Activated CD4-positive, alpha-beta memory T cell treated with anti-CD3 and anti-CD28 coated beads for 36 hours (primary cell): ENCODE measurements at regions of chr10 and their contacts with region 1.

Region 1: DNA sequence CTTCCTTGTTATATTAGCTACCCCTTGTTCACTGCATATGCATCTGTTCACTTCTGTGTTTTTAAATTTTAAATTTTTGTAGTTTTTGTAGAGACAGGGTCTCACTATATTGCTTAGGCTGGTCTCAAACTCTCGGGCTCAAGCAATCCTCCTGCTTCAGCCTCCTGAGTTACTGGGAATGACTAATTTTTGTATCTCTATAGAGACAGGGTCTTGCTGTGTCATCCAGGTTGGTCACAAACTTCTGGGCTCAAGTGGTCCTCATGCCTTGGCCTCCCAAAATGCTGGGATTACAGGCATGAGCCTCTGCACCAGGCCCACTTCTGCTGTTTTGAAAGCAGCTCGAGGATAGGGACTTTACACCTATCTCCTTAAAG is 64.6 kb downstream of the PRTFDC1 start:
- DNase-seq: no peak
- H3K4me3 Mint-ChIP-seq: no peak overlapping the region
- H3K27ac Mint-ChIP-seq: peak overlapping the region; percentile 76
- H3K4me1 Mint-ChIP-seq: peaks cover 35% of the 10 kb centered on the region
- H3K27me3 Mint-ChIP-seq: no peaks in the 10 kb centered on the region

Region 2: GRCh38 chr10:24806262-24806661 is 81.6 kb before region 1 on chr10:
- CTCF ChIA-PET with region 1: no interaction called
- POLR2A ChIA-PET with region 1: no interaction called
- intact Hi-C with region 1: no loop called
- DNase-seq: no peak
- H3K4me3 Mint-ChIP-seq: no peak overlapping the region
- H3K27ac Mint-ChIP-seq: no peak overlapping the region
- H3K4me1 Mint-ChIP-seq: no peaks in the 10 kb centered on the region
- H3K27me3 Mint-ChIP-seq: no peaks in the 10 kb centered on the region

Region 3: GRCh38 chr10:24826019-24826418 is 61.8 kb before region 1 on chr10:
- CTCF ChIA-PET with region 1: no interaction called
- POLR2A ChIA-PET with region 1: no interaction called
- intact Hi-C with region 1: no loop called
- DNase-seq: no peak
- H3K4me3 Mint-ChIP-seq: peak overlapping the region; percentile 40
- H3K27ac Mint-ChIP-seq: no peak overlapping the region
- H3K4me1 Mint-ChIP-seq: peaks cover 36% of the 10 kb centered on the region
- H3K27me3 Mint-ChIP-seq: no peaks in the 10 kb centered on the region

Region 4: DNA sequence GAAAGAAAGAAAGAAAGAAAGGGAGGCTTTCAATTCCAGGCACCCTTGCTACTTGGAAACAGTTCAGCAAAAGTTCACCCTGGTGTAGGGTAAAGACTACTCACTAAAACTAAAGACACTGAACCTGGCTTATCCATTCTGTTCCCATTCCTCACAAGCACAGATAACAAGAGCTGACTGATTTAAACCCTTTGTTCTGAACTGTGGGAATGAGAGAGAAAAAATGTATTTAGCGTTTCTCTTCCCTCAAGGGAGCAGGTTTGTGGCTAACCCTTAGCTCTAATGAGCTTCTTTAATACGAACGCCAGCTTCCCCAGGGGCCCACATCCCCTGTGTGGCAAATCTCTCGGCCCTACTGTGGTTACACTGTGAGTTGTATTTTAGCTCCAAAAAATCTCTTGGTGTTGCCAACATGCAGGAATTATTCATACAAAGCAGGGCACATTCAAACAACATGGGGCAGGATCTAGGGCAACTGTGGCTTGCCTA is 41.3 kb after region 1 on chr10:
- CTCF ChIA-PET with region 1: no interaction called
- POLR2A ChIA-PET with region 1: no interaction called
- intact Hi-C with region 1: no loop called
- DNase-seq: no peak
- H3K4me3 Mint-ChIP-seq: no peak overlapping the region
- H3K27ac Mint-ChIP-seq: no peak overlapping the region
- H3K4me1 Mint-ChIP-seq: peaks cover 4% of the 10 kb centered on the region
- H3K27me3 Mint-ChIP-seq: no peaks in the 10 kb centered on the region

Region 5: GRCh38 chr10:24952707-24953645 is 65.1 kb after region 1 on chr10:
- CTCF ChIA-PET with region 1: no interaction called
- POLR2A ChIA-PET with region 1: no interaction called
- intact Hi-C with region 1: loop called (anchors 2 kb)
- DNase-seq: peak; percentile 48
- H3K4me3 Mint-ChIP-seq: peak overlapping the region; percentile 66
- H3K27ac Mint-ChIP-seq: no peak overlapping the region
- H3K4me1 Mint-ChIP-seq: peaks cover 21% of the 10 kb centered on the region
- H3K27me3 Mint-ChIP-seq: peaks cover 4% of the 10 kb centered on the region